ENCODE measurements at regions of chr22 and their contacts with region 1.

Region 1: DNA sequence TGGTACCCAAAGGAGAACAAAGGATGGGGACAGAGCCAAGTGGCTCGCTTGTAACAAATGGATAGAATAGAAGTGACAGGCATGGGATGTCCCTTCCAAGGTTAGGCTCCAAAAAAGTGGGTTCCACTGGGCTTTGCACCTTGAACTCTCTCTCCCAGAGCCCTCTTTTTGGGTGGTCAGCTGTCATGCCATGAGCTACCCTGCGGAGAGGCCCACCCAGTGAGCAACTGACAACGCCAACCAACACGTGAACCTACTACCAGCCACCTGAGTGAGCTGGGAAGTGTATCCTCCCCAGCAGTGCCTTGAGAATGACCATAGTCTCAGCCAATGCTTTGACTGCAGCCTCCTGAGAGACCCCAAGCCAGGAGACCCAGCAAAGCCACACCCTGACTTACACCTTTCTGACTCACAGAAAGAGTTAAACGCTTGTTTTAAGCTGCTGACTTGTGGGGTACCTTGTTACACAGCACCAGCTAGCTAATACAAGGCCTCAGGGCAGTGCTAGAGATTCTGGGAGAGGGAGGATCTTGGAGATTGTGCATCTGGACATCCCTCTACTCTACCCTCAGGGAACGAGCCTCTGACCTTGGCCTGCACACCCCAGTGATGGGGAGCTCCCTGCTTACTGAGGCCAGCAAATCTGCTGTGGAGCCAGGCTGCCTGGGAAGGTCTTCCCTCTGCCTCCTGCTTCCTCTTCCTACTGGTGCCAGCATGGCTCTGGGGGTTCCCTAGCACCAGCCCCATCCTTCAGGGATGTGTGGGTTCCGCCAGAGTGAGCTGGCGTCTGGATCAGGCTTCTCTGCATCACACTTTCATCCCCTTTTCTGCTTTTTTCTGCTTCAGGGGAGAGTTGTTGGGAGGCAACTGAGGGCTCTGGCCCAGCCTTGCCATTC is 29.1 kb upstream of the RFPL3 start:
- DNase-seq: no peak
- ATAC-seq: no peak

Region 2: GRCh38 chr22:32281072-32281471 is 47.5 kb before region 1 on chr22:
- intact Hi-C with region 1: loop called (anchors 2 kb)
- DNase-seq: peak; percentile 35
- ATAC-seq: no peak

Region 3: DNA sequence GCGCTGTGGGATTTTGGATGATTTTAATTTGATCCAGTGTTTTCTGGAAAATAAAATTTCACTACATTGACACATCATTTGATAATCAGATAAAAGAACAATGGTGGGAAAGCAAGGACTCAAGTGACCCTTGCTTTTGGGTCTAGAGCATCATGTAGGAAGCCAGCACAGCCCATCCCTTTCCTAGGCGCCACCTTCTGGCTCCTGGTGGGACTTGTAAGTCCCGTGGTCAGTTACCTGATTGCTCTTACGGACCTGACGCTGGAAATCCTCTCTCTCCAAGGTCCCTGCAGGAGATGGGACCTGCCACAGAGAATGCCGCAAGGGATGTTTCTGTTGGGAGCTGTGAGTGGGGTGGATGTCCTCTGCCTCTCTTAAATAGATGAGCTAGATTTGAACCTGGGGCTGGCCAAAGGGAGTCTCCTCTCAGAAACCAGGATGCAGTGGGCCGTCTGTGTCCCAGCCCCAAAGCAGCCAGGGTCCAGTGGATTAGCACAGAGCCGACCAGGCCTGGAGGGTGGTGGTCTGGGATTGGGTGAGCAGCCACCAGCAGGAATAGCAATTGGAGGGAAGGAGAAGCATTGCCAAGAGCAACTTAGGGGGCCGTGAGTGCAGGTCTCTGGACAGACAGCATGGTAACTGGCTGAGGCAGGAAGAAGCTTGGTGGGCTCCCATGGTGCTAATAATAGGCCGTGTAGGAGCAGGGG is 494.6 kb after region 1 on chr22:
- intact Hi-C with region 1: no loop called
- DNase-seq: no peak
- ATAC-seq: no peak